CD4-positive, alpha-beta memory T cell (primary cell): ENCODE measurements at regions of chr5 and their contacts with region 1.

Region 1: DNA sequence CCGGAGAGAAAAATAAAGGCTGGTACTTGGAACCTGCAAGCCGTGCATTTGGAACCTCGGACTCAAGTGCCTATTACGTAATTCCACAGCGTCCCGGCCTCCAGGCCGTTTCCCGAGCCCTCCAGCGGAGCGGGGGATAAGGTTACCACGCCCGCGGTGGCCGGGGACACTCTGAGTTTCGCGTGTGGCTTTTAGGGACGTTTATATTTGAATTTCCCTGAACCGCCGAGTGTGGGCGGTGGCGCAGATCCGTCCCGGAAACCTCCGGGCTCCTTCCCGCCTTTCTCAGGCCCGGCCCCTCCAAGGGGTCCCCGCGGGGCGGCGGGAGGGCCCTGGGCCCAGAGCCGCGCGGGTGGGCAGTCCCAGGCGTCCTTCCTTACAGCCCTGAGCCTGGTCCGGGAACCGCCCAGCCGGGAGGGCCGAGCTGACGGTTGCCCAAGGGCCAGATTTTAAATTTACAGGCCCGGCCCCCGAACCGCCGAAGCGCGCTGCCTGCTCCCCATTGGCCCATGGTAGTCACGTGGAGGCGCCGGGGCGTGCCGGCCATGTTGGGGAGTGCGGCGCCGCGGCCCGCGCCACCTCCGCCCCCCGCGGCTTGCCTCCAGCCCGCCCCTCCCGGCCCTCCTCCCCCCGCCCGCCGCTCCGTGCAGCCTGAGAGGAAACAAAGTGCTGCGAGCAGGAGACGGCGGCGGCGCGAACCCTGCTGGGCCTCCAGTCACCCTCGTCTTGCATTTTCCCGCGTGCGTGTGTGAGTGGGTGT is at the start of gene LMNB1:
- DNase-seq: peak; percentile 92 to 98 (median 94)
- H3K4me3 ChIP-seq: peak within 1 kb of the TSS; percentile 78 to 94
- H3K4me3 Mint-ChIP-seq: peak within 1 kb of the TSS; percentile 88 to 98 (median 95)
- H3K27ac ChIP-seq: peak within 1 kb of the TSS; percentile 85
- H3K27ac Mint-ChIP-seq: peak within 1 kb of the TSS; percentile 86 to 99 (median 95)
- H3K4me1 ChIP-seq: peaks cover 37% of the 10 kb centered on the region
- H3K4me1 Mint-ChIP-seq: peaks cover 16 to 35% (median 25%) of the 10 kb centered on the region in 4 donors
- H3K27me3 ChIP-seq: no peaks in the 10 kb centered on the region
- H3K27me3 Mint-ChIP-seq: no peaks in the 10 kb centered on the region
- total RNA-seq, gene LMNB1: 28.2 to 32.3 TPM

Region 2: GRCh38 chr5:126600631-126601511 is 175.8 kb before region 1 on chr5 and contains the start of gene PHAX:
- CTCF ChIA-PET with region 1: interaction called, 19 read pairs
- POLR2A ChIA-PET with region 1: interaction called, 24 read pairs
- intact Hi-C with region 1: loop called (anchors 1 kb)
- DNase-seq: peak; percentile 68 to 75 (median 74)
- H3K4me3 ChIP-seq: peak within 1 kb of the TSS; percentile 50 to 95
- H3K4me3 Mint-ChIP-seq: peak within 1 kb of the TSS; percentile 96 to 99 (median 97)
- H3K27ac ChIP-seq: peak within 1 kb of the TSS; percentile 80
- H3K27ac Mint-ChIP-seq: peak within 1 kb of the TSS; percentile 84 to 99 (median 96)
- H3K4me1 ChIP-seq: peaks cover 31% of the 10 kb centered on the region
- H3K4me1 Mint-ChIP-seq: peaks cover 22 to 46% (median 34%) of the 10 kb centered on the region in 4 donors
- H3K27me3 ChIP-seq: no peaks in the 10 kb centered on the region
- H3K27me3 Mint-ChIP-seq: no peaks in the 10 kb centered on the region
- total RNA-seq, gene PHAX: 41.2 to 43.4 TPM

Region 3: DNA sequence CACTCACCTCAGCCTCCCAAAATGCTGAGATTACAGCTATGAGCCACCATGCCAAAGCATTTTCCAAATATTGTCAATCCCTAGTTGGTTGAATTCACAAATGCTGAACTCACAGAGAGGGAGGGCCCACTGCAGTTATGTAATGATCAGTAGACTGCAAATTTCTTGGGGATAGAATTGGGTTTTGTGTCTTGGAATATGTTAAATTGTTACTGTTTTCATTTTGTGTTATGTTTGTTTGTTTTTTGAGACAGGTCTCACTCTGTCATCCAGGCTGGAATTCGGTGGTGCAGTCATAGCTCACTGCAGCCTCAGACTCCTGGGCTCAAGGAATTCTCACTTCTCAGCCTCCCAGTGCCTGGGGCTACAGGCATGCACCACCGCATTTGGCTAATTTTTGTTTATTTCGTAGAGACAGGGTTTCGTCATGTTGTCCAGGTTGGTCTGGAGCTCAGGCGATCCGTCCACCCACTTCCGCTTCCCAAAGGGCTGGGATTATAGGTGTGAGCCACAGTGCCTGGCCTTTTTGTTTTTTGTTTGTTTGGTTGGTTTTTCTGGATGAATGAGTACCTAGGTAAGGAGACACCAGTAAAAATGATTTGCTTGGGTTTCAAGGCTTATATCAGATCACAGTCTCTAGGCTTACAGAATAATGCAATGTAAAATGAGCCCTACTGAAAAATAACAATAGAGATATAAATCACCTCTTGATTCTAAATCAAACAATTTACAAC is 31.3 kb before region 1 on chr5:
- CTCF ChIA-PET with region 1: interaction called, 25 read pairs
- POLR2A ChIA-PET with region 1: interaction called, 28 read pairs
- intact Hi-C with region 1: loop called (anchors 1 kb)
- DNase-seq: no peak
- H3K4me3 ChIP-seq: no peak overlapping the region
- H3K4me3 Mint-ChIP-seq: no peak overlapping the region
- H3K27ac ChIP-seq: no peak overlapping the region
- H3K27ac Mint-ChIP-seq: peak overlapping the region in 3 of 7 donors; percentile 17 to 57 (median 27)
- H3K4me1 ChIP-seq: peaks cover 17% of the 10 kb centered on the region
- H3K4me1 Mint-ChIP-seq: peaks cover 11 to 24% (median 14%) of the 10 kb centered on the region in 4 donors
- H3K27me3 ChIP-seq: no peaks in the 10 kb centered on the region
- H3K27me3 Mint-ChIP-seq: peaks cover 0 to 3% of the 10 kb centered on the region in 2 donors

Region 4: GRCh38 chr5:126801992-126802294 is 25.3 kb after region 1 on chr5:
- CTCF ChIA-PET with region 1: interaction called, 93 read pairs
- POLR2A ChIA-PET with region 1: interaction called, 13 read pairs
- intact Hi-C with region 1: no loop called
- DNase-seq: peak in 3 of 5 donors; percentile 19 to 22 (median 19)
- H3K4me3 ChIP-seq: no peak overlapping the region
- H3K4me3 Mint-ChIP-seq: no peak overlapping the region
- H3K27ac ChIP-seq: no peak overlapping the region
- H3K27ac Mint-ChIP-seq: peak overlapping the region in 3 of 7 donors; percentile 10 to 36 (median 19)
- H3K4me1 ChIP-seq: no peaks in the 10 kb centered on the region
- H3K4me1 Mint-ChIP-seq: peaks cover 24 to 49% (median 30%) of the 10 kb centered on the region in 4 donors
- H3K27me3 ChIP-seq: no peaks in the 10 kb centered on the region
- H3K27me3 Mint-ChIP-seq: no peaks in the 10 kb centered on the region

Region 5: DNA sequence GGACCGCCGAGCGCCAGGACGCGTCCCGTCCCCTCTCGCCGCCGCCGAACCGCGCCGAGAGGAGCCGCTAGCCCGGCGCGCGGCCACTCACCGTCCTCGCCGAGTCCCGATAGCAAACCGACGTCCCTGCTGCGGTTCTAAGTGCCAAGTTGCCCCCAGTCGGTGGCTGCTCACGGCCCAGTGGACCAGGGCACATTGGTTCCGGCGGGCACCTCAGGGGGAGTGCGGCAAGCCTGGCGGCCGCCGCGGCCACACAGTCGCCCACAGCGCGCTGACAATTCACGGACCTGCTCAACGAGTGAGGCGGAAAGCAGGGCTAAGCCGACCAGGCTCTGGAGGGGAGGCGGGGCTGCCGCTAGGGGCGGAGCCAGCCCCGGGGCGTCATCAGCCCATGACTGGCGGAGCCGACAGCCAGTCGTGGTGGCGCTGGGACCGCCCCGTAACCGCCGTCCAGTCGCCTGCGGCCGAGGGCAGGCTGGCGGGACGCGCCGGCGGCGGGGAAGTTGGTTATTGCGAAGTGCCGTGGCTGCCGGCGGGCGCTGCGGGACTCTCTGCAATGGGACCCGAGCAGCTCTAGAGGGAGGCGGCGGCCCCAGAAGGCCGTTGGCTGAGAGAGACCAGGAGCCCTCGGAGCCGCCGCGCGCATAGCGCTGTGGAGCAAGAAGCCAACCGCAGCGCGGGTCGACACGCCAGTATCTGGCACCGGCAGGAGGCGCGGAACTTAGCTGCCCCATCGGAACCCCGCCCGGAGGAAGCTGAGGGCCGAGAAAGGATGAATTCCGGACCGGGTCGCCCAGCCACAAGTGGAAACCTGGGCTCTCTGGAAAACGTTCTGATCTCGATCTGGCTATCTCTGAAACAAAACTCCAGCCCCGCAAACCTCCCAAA is 253.8 kb after region 1 on chr5 and contains the start of gene MARCHF3:
- CTCF ChIA-PET with region 1: interaction called, 6 read pairs
- POLR2A ChIA-PET with region 1: interaction called, 22 read pairs
- intact Hi-C with region 1: loop called (anchors 1 kb)
- DNase-seq: peak; percentile 92 to 95 (median 94)
- H3K4me3 ChIP-seq: peak within 1 kb of the TSS; percentile 51 to 85
- H3K4me3 Mint-ChIP-seq: peak within 1 kb of the TSS; percentile 89 to 94 (median 90)
- H3K27ac ChIP-seq: peak within 1 kb of the TSS; percentile 56
- H3K27ac Mint-ChIP-seq: peak within 1 kb of the TSS; percentile 35 to 91 (median 77)
- H3K4me1 ChIP-seq: peaks cover 16% of the 10 kb centered on the region
- H3K4me1 Mint-ChIP-seq: peaks cover 5 to 17% (median 7%) of the 10 kb centered on the region in 4 donors
- H3K27me3 ChIP-seq: no peaks in the 10 kb centered on the region
- H3K27me3 Mint-ChIP-seq: peaks cover 0 to 17% of the 10 kb centered on the region in 2 donors
- total RNA-seq, gene MARCHF3: 3.2 to 3.3 TPM

Region 6: DNA sequence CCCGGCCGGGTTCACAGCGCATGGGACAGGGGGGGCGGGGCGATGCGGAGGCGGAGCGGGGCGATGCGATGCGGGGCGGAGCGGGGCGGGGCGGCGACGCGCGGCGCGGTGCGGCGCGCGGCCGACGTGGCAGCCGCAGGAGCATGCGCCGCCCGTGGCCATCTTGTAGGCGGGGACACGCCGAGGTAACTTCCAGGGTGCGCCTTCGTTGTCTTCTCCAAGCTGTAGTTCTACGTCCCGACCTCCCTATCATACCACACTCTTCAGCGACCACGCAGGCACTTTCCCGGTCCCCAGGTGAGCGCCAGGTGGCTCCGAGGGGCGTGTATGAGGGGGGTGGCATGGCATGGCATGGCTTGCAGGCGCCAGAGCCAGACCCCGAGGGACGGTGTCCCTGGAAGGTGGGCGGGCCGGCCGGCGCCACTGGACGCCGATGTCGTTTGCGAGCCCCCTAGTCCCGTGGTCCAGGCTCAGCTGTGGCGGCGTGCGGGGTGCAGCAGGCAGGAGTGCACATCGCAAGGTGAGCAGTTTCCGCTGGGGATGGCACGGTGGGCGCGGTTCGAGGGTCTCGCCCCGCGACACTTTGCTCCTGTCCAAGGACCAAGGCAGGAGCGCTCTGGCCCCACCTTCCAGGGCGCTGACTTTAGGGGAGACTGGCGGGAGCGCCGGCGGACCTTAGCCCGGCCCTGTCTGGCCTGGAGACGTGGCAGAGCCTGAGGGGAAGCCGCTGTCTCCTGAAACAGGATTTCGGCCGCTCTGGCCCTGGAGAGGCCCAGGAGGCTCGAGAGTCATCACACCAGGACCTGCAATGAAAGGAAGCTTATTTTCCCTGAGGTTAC is 741.0 kb after region 1 on chr5 and contains the start of gene PRRC1:
- CTCF ChIA-PET with region 1: interaction called, 5 read pairs
- POLR2A ChIA-PET with region 1: interaction called, 3 read pairs
- intact Hi-C with region 1: loop called (anchors 2 kb)
- DNase-seq: peak; percentile 74 to 83 (median 76)
- H3K4me3 ChIP-seq: peak within 1 kb of the TSS; percentile 79 to 97
- H3K4me3 Mint-ChIP-seq: peak within 1 kb of the TSS; percentile 87 to 93 (median 90)
- H3K27ac ChIP-seq: peak within 1 kb of the TSS; percentile 87
- H3K27ac Mint-ChIP-seq: peak within 1 kb of the TSS; percentile 70 to 93 (median 88)
- H3K4me1 ChIP-seq: peaks cover 25% of the 10 kb centered on the region
- H3K4me1 Mint-ChIP-seq: peaks cover 26 to 45% (median 34%) of the 10 kb centered on the region in 4 donors
- H3K27me3 ChIP-seq: peaks cover under 1% of the 10 kb centered on the region
- H3K27me3 Mint-ChIP-seq: peaks cover 4% of the 10 kb centered on the region in 2 donors
- total RNA-seq, gene PRRC1: 57.0 to 59.9 TPM